Caco-2 (cell line): ENCODE measurements at regions of chr10 and their contacts with region 1.

Region 1: DNA sequence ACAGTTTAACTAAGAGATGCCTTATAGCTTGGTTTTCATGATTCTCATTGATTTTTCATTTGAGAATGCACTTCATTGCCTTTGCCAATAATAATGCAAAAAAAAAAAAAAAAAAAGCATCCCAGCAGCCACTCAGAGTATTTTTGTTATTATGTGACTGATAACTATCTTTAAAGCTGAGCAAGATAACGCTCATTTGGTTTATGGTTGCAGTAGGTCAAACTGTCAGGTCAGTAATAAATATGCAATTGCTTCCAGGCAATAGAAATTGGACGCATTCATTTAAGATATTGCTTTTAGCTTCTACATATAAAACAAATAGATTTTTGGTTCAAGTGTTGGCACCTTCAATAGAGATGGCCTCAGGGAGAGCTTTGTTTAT is 215.1 kb downstream of the PRPF18 start:
- DNase-seq: no peak
- H3K4me3 ChIP-seq: no peak overlapping the region
- H3K4me3 Mint-ChIP-seq: no peak overlapping the region
- H3K27ac Mint-ChIP-seq: no peak overlapping the region
- H3K4me1 ChIP-seq: peaks cover 3% of the 10 kb centered on the region; the same call in 1 of the 2 replicates
- H3K4me1 Mint-ChIP-seq: peaks cover 13% of the 10 kb centered on the region
- H3K27me3 ChIP-seq: no peaks in the 10 kb centered on the region
- H3K27me3 Mint-ChIP-seq: no peaks in the 10 kb centered on the region
- CTCF ChIP-seq: no peak

Region 2: DNA sequence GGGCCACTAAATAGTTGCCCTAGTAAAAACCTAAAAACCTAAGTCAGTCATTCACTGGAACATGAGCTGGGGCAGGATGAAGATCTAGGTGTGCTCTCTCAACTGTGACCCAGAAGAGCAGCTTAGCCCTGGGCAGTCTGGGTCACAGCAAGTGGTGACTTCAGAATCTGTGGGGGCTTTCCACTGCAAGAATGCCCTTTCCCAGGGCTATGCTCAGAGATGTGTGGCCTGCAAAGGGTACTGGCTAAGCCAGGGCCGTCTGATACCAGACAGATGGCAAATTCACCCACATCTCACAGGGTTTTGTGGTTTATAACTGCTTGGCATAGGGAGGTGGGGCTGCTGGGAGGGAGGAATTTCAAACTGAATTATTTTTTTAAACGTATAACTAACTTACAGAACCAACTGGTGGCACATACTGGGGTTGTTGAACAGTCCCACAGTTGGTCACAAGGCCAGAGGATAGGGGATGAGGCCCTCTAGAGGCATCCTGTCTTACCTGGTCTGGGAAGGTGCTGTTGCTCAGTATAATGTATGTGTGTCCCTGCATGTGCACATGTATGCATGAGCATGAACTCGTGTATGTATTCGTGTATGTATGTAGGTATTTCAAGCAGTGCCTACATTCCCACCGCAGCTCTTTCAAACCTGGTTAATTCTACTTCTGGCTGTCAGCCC is 151.9 kb before region 1 on chr10:
- CTCF ChIA-PET with region 1: no interaction called
- POLR2A ChIA-PET with region 1: no interaction called
- intact Hi-C with region 1: no loop called
- DNase-seq: peak in 1 of 2 experiments; percentile 26
- H3K4me3 ChIP-seq: no peak overlapping the region
- H3K4me3 Mint-ChIP-seq: no peak overlapping the region
- H3K27ac Mint-ChIP-seq: no peak overlapping the region
- H3K4me1 ChIP-seq: no peaks in the 10 kb centered on the region
- H3K4me1 Mint-ChIP-seq: no peaks in the 10 kb centered on the region
- H3K27me3 ChIP-seq: no peaks in the 10 kb centered on the region
- H3K27me3 Mint-ChIP-seq: no peaks in the 10 kb centered on the region
- CTCF ChIP-seq: no peak

Region 3: DNA sequence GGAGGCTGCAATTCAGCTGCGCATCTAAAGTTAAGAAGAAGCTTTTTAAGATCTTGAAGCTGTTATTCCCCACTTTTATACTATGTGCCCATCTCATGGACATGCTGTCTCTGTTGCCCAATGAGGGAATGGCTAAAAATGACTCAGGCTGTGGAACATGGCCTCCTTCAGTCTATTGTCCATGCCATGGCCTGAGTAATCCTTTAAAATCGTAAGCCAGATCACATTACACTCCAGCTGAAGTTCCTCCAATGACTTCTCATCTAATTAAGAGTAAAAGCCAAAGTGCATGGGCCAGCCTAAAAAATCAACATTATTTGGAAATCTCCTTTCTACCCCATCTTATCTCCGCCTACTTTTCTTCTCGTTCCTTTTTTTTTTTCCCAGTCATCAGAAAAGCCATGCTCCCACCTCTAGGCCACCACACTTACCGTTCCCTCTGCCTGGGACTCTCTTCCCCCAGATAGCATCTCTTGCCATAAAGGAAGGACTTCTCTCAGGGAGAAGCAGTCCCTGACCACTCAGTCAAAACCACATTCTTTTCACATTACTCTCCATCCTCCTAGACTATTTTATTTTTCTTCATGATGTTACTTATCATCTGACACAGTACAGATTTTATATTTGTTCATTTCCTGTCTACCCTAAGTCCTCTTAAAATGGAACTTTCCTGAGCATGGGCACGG is 122.3 kb after region 1 on chr10:
- CTCF ChIA-PET with region 1: no interaction called
- POLR2A ChIA-PET with region 1: interaction called, 17 read pairs
- intact Hi-C with region 1: no loop called
- DNase-seq: no peak
- H3K4me3 ChIP-seq: no peak overlapping the region
- H3K4me3 Mint-ChIP-seq: no peak overlapping the region
- H3K27ac Mint-ChIP-seq: no peak overlapping the region
- H3K4me1 ChIP-seq: no peaks in the 10 kb centered on the region
- H3K4me1 Mint-ChIP-seq: no peaks in the 10 kb centered on the region
- H3K27me3 ChIP-seq: no peaks in the 10 kb centered on the region
- H3K27me3 Mint-ChIP-seq: peaks cover 6% of the 10 kb centered on the region
- CTCF ChIP-seq: no peak

Region 4: DNA sequence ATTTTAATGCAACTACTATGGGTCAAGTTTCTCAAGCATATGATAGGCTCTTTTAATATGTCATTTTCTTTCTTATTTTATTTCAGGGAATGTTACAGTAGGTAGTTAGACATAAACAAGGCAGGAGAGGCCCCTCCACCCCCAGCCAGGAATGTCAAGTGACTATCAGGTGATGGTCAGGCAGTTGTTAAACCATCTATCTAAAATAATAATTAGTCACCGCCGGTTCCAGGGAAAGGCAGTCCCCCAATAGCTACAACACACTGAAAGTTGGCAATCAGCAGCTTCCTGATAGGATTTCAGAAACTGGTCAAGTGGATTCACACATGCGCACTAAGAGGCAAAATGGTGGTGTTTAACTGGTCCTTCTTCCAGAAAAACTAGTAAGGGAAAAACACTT is 1251.2 kb after region 1 on chr10:
- CTCF ChIA-PET with region 1: no interaction called
- POLR2A ChIA-PET with region 1: no interaction called
- intact Hi-C with region 1: no loop called
- DNase-seq: no peak
- H3K4me3 ChIP-seq: no peak overlapping the region
- H3K4me3 Mint-ChIP-seq: no peak overlapping the region
- H3K27ac Mint-ChIP-seq: no peak overlapping the region
- H3K4me1 ChIP-seq: no peaks in the 10 kb centered on the region
- H3K4me1 Mint-ChIP-seq: no peaks in the 10 kb centered on the region
- H3K27me3 ChIP-seq: no peaks in the 10 kb centered on the region
- H3K27me3 Mint-ChIP-seq: peaks cover 2% of the 10 kb centered on the region
- CTCF ChIP-seq: no peak